Activated B cell treated with CpG ODN at 0.5 μM for 24 hours (primary cell): ENCODE measurements at regions of chr10 and their contacts with region 1.

Region 1: DNA sequence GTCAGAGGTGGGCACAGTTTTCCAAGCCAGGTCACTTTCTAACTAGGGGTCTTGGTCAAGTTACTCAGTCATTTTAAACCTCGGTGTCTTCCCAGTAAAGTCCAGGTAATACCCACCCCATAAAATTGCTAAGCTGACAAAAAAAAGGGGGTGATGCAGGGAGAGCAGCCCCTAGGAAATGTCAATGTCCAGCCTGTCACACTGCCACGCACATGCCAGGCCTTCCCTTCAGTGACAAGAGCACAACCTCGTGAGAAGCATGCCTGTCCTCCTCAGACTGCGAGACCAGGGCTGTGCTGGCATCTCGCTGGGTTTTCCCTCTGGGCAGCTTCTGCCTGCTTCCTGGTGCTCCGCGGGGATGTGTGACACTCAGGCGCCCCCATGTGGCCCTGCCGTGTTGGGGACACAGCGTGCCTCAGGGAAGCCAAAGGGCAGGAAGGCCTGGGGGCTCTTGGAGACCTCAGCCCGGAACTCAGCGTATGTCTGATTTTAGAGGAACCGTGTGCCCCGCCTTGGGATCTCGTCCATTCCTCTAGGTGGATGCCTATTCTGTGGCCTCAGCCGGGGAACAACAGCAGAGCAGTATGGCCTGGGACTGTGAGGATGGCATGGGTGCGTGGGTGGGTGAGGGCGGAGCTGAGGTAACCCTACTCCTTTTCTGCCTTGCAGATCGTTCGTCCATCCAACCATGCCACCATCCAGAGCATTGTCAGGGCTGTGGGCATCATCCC is 10.2 kb upstream of the GDF2 start:
- DNase-seq: peak; percentile 58
- ATAC-seq: peak; percentile 84
- H3K4me3 Mint-ChIP-seq: no peak overlapping the region
- H3K27ac Mint-ChIP-seq: no peak overlapping the region
- H3K4me1 Mint-ChIP-seq: no peaks in the 10 kb centered on the region
- H3K27me3 Mint-ChIP-seq: no peaks in the 10 kb centered on the region
- CTCF ChIP-seq: peak; percentile 52

Region 2: DNA sequence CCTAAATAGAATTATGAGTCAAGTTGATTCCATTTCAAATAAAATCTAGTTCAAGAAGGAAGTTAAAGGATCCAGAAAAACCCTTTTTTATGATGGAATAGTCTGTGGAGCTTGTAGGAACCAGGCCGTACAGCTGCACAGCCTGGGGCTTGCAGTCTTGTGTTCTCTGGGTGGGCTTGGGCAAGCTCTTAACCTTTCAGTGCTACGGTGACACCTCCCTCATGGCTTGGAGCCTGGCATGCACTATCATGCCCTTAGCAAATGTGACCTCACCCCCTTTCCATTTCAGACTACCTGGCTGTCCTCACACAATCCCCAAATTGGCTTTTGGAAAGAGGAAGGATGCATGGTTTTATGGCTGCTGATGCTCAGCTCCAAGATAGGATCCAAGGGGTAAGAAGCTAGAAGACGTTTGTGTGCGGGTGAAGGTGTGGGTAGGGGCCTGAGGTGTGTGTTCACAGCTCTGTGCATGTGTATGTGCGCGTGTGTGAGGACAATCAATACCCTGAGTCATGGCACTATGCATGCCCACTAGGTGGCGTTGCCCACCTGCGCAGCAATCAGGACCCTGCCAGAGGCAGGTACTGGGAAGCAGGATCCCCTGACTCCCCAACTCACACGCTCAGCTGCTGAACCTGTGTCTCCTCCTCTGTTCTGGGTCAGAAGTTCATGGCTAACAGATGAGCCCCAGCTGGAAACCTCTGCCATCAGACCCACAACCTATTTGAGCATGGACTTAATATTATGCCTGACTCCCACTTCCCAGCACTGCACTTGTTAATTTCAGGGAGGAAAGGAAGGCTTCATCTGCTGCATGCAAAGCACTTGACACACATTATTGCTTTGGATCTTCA is 287.5 kb before region 1 on chr10:
- CTCF ChIA-PET with region 1: interaction called, 53 read pairs
- POLR2A ChIA-PET with region 1: no interaction called
- intact Hi-C with region 1: no loop called
- DNase-seq: peak; percentile 32
- ATAC-seq: peak; percentile 49
- H3K4me3 Mint-ChIP-seq: no peak overlapping the region
- H3K27ac Mint-ChIP-seq: no peak overlapping the region
- H3K4me1 Mint-ChIP-seq: no peaks in the 10 kb centered on the region
- H3K27me3 Mint-ChIP-seq: no peaks in the 10 kb centered on the region
- CTCF ChIP-seq: no peak

Region 3: GRCh38 chr10:47047671-47048525 is 264.2 kb before region 1 on chr10:
- CTCF ChIA-PET with region 1: interaction called, 70 read pairs
- POLR2A ChIA-PET with region 1: no interaction called
- intact Hi-C with region 1: loop called (anchors 1 kb)
- DNase-seq: peak; percentile 41
- ATAC-seq: no peak
- H3K4me3 Mint-ChIP-seq: no peak overlapping the region
- H3K27ac Mint-ChIP-seq: no peak overlapping the region
- H3K4me1 Mint-ChIP-seq: no peaks in the 10 kb centered on the region
- H3K27me3 Mint-ChIP-seq: no peaks in the 10 kb centered on the region
- CTCF ChIP-seq: no peak